ENCODE measurements at regions of chr2 and their contacts with region 1.

Region 1: DNA sequence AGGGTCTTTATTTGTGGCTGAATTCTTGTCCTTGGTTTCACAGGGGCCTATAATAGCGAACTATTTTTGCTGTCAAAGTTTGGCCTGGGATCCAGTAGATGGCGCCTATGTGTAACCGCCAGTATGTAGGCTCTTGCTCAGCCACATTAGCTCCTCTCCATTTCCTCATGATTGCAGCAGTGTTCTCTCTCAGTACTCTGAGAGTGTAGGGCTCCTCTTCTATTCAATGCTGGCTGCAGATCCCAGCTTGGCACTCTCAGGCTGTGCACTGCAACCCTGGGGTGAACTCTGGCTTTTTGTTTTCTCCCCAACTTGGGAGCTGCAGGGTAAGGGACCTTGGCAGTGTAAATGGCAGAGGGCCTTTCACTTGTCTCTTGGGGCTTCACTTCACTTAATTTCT is 344.6 kb upstream of the CHAC2 start:
- DNase-seq: peak; percentile 51
- H3K4me3 ChIP-seq: no peak overlapping the region
- H3K27ac ChIP-seq: no peak overlapping the region
- H3K4me1 ChIP-seq: no peaks in the 10 kb centered on the region
- H3K27me3 ChIP-seq: no peaks in the 10 kb centered on the region
- CTCF ChIP-seq: peak; percentile 41 to 53

Region 2: DNA sequence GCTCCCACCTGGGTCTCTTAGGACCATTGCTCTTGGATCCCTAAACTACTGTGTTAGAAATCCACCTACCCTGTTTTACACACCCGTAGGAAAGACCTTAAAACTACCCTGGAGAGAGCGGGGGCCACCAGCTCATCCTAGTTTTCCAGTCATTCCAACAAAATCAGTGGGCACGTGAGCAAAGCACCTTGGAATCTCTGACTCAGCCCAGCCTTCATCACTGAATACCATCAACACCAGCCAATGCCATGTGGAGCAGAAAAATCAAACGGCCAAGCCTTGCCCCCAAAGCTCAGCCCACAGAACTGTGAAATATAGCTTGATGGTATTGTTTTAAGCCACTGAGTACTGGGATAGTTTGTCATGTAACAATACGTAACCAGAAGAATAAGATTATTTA is 105.1 kb before region 1 on chr2:
- CTCF ChIA-PET with region 1: no interaction called
- dilution Hi-C with region 1: no loop called
- in situ Hi-C with region 1: no loop called
- intact Hi-C with region 1: no loop called
- DNase-seq: peak; percentile 21
- H3K4me3 ChIP-seq: no peak overlapping the region
- H3K27ac ChIP-seq: no peak overlapping the region
- H3K4me1 ChIP-seq: peaks cover 20% of the 10 kb centered on the region
- H3K27me3 ChIP-seq: no peaks in the 10 kb centered on the region
- CTCF ChIP-seq: no peak

Region 3: GRCh38 chr2:53715568-53715967 is 292.6 kb after region 1 on chr2:
- CTCF ChIA-PET with region 1: no interaction called
- dilution Hi-C with region 1: no loop called
- in situ Hi-C with region 1: no loop called
- intact Hi-C with region 1: loop called (anchors 10 kb)
- DNase-seq: no peak
- H3K4me3 ChIP-seq: no peak overlapping the region
- H3K27ac ChIP-seq: no peak overlapping the region
- H3K4me1 ChIP-seq: no peaks in the 10 kb centered on the region
- H3K27me3 ChIP-seq: no peaks in the 10 kb centered on the region
- CTCF ChIP-seq: peak; percentile 50 to 63

Region 4: GRCh38 chr2:53859206-53860181 is 436.5 kb after region 1 on chr2 and contains the start of gene GPR75:
- CTCF ChIA-PET with region 1: no interaction called
- dilution Hi-C with region 1: no loop called
- in situ Hi-C with region 1: no loop called
- intact Hi-C with region 1: loop called (anchors 10 kb)
- DNase-seq: peak; percentile 37
- H3K4me3 ChIP-seq: peak within 1 kb of the TSS in 2 of 3 experiments; percentile 30 to 54
- H3K27ac ChIP-seq: no peak within 1 kb of the TSS
- H3K4me1 ChIP-seq: peaks cover 8% of the 10 kb centered on the region
- H3K27me3 ChIP-seq: no peaks in the 10 kb centered on the region
- CTCF ChIP-seq: no peak
- total RNA-seq, gene GPR75: 4.7 to 7.8 TPM